Posterior vena cava (tissue), 2 donors: ENCODE measurements at regions of chr6 and their contacts with region 1.

Region 1: DNA sequence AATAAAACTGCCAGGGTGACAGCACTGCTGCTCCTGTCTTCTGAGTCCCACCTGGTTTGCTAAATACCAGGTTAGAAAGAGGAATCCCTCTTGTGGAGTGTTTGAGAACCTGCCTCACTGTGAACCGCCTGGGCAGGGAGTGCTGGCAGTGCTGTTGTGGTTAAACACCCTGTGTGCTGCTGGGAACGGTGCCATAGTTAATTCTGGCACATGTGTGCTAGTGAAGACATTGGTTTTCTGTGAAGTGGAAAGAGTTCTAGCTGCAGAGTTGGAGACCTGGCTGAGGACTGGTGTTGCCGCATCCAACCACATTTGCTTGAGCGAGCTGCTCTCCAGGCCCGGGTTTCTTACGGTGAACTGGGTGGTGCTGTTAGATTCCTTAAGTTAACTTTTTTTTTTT is 72.7 kb downstream of the IGF2R start:
- DNase-seq: peak; percentile 81

Region 2: DNA sequence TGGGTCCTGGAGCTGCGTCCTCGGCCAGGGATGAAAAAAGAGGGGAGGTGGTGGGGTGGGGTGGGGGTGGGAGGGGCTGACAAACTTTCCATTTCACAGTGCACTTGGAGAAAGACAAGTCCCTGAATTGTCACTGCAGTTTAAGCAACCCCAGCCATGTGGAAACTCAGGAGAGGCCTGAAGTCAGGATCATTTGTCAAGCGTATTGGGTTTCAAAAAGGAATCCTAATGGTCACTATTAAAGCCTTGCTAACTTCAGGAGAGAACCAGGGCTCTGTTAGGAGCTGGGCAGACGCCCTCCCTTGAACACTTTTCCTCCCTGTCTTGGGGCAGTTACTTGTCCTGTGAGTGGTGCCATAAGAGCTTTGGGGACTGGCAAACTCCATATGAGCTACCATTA is 712.5 kb before region 1 on chr6:
- intact Hi-C with region 1: no loop called
- DNase-seq: no peak

Region 3: GRCh38 chr6:159852877-159853276 is 188.7 kb before region 1 on chr6:
- intact Hi-C with region 1: loop called in 1 of 2 experiments (anchors 10 kb)
- DNase-seq: no peak

Region 4: GRCh38 chr6:159968440-159969203 is 73.0 kb before region 1 on chr6 and contains the start of gene IGF2R:
- intact Hi-C with region 1: loop called in 1 of 2 experiments (anchors 10 kb)
- DNase-seq: peak; percentile 97
- total RNA-seq, gene IGF2R: 62.7 to 71.8 TPM

Region 5: GRCh38 chr6:159979136-159979874 is 62.3 kb before region 1 on chr6:
- intact Hi-C with region 1: loop called (anchors 5 to 10 kb)
- DNase-seq: no peak

Region 6: DNA sequence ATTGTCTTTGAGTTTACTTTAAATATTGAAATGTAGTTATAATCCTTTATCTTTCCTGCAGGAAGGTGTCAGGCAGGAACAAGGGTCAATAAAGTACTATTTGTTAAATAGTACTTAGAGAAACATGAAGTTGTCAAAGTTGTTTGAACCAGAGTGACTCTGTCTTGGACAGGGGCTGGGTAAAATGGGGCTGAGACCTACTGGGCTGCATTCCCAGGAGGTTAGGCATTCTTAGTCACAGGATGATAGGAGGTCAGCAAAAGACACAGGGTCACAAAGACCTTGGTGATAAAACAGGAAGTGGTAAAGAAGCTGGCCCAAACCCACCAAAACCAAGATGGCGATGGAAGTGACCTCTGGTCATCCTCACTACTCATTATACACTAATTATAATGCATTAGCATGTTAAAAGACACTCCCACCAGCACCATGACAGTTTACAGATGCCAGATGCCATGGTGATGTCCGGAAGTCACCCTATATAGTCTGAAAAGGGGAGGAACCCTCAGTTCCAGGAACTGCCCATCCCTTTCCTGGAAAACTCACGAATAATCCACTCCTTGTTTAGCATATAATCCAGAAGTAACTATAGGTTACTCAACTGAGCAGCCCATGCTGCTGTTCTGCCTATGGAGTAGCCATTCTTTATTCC is 197.3 kb after region 1 on chr6:
- intact Hi-C with region 1: no loop called
- DNase-seq: no peak